ENCODE measurements at regions of chr5 and their contacts with region 1.

Region 1: GRCh38 chr5:86878250-86878649 is 260.5 kb downstream of the COX7C start:
- DNase-seq: peak; percentile 15
- H3K4me3 ChIP-seq: no peak overlapping the region
- CTCF ChIP-seq: no peak

Region 2: GRCh38 chr5:86971034-86971571 is 92.9 kb after region 1 on chr5:
- in situ Hi-C with region 1: loop called (anchors 5 kb)
- DNase-seq: no peak
- H3K4me3 ChIP-seq: no peak overlapping the region
- CTCF ChIP-seq: peak; percentile 23

Measured in astrocyte of the cerebellum (primary cell).